Panc1 (cell line): ENCODE measurements at regions of chr17 and their contacts with region 1.

Region 1: GRCh38 chr17:78289802-78290363 is 58.5 kb downstream of the TMEM235 start:
- DNase-seq: peak; percentile 75
- ATAC-seq: peak; percentile 95
- H3K4me3 ChIP-seq: no peak overlapping the region
- H3K27ac ChIP-seq: peak overlapping the region; percentile 45
- H3K4me1 ChIP-seq: peaks cover 20% of the 10 kb centered on the region
- H3K27me3 ChIP-seq: no peaks in the 10 kb centered on the region
- CTCF ChIP-seq: peak; percentile 95; the same call in 1 of the 2 replicates

Region 2: GRCh38 chr17:78231991-78232858 is 57.7 kb before region 1 on chr17:
- CTCF ChIA-PET with region 1: no interaction called
- POLR2A ChIA-PET with region 1: no interaction called
- in situ Hi-C with region 1: no loop called
- intact Hi-C with region 1: no loop called
- DNase-seq: no peak
- ATAC-seq: no peak
- H3K4me3 ChIP-seq: no peak overlapping the region
- H3K27ac ChIP-seq: no peak overlapping the region
- H3K4me1 ChIP-seq: no peaks in the 10 kb centered on the region
- H3K27me3 ChIP-seq: no peaks in the 10 kb centered on the region
- CTCF ChIP-seq: no peak

Region 3: DNA sequence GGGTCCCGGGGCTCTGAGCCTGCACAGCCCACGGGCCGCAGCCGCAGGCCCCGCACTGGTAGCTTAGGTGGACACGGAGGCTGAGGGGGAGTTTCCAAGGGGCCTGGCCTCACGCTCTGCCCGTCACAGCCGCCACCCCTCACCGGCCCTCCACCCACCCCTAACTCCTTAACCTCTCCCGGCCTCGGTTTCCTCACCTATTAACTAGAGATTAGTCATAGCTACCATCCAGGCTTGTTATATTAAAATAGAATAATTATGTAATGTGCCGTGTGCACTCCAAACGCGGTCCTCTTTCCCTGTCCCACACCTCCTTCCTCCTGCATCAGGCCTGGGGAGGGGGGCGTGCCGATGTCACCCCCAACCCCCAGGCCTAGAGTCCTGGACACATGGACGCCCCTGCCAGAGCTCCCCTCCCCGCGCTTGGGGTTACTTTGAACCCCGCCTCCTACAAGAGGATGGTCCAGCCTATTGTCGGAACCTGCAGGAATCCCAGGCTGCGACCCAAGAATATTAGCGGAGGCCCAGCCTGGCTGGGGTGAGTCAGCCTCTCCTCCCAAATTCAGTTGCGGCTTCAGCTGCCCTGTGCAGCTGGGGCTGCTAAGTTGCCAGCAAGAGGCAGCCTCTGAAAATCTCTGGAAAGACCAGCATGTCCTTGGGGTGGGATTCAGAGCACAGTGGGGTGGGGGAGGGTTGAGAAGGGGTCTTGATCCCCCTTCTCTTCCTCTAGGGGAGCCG is 52.7 kb after region 1 on chr17:
- CTCF ChIA-PET with region 1: no interaction called
- POLR2A ChIA-PET with region 1: interaction called, 10 read pairs
- in situ Hi-C with region 1: no loop called
- intact Hi-C with region 1: no loop called
- DNase-seq: no peak
- ATAC-seq: peak; percentile 69
- H3K4me3 ChIP-seq: peak overlapping the region; percentile 41 to 47
- H3K27ac ChIP-seq: peak overlapping the region; percentile 90
- H3K4me1 ChIP-seq: peaks cover 54% of the 10 kb centered on the region
- H3K27me3 ChIP-seq: no peaks in the 10 kb centered on the region
- CTCF ChIP-seq: no peak

Region 4: DNA sequence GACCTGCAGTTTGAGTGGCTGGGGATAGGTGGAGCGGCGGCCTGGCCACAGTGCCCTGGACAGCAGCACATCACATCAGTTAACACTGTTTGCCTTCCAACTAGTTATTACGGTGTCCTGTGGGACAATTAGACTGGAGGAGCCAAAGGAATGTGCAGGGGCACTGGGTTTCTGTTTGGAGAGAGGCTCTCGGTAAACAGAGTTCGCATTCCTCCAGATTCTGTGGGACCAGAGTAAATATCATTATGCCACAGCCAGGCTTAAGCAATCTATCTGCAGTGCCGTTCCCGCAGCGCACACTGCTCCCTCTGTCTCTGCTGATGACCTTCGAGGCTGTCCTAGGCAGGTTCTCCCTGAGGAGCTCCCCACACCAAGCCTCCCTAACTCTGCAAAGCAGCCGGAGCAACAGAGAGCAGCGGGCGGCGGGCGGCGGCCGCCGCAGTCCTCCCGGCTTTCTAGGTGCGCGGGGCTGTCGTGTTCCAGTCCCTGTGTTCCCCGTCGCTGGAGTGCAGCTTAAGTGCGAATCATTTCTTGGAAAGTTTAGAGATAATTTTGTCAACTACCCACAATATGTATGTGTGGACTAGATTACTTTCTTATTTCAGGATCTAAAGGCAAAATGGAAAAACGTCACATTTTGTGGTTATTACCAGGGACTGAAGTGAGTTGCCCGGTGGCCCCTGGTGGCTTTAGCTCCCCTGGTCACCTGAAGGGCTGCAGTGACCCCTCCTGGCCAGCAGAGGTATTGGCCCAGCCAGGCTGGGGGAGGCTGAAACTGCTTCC is 131.8 kb after region 1 on chr17:
- CTCF ChIA-PET with region 1: interaction called, 5 read pairs
- POLR2A ChIA-PET with region 1: interaction called, 9 read pairs
- in situ Hi-C with region 1: no loop called
- intact Hi-C with region 1: loop called (anchors 10 kb)
- DNase-seq: peak; percentile 51
- ATAC-seq: peak; percentile 88
- H3K4me3 ChIP-seq: no peak overlapping the region
- H3K27ac ChIP-seq: peak overlapping the region; percentile 6; the same call in 1 of the 2 replicates
- H3K4me1 ChIP-seq: peaks cover 12% of the 10 kb centered on the region; the same call in 1 of the 2 replicates
- H3K27me3 ChIP-seq: no peaks in the 10 kb centered on the region
- CTCF ChIP-seq: peak; percentile 99